CD4-positive, alpha-beta memory T cell (primary cell): ENCODE measurements at regions of chr15 and their contacts with region 1.

Region 1: DNA sequence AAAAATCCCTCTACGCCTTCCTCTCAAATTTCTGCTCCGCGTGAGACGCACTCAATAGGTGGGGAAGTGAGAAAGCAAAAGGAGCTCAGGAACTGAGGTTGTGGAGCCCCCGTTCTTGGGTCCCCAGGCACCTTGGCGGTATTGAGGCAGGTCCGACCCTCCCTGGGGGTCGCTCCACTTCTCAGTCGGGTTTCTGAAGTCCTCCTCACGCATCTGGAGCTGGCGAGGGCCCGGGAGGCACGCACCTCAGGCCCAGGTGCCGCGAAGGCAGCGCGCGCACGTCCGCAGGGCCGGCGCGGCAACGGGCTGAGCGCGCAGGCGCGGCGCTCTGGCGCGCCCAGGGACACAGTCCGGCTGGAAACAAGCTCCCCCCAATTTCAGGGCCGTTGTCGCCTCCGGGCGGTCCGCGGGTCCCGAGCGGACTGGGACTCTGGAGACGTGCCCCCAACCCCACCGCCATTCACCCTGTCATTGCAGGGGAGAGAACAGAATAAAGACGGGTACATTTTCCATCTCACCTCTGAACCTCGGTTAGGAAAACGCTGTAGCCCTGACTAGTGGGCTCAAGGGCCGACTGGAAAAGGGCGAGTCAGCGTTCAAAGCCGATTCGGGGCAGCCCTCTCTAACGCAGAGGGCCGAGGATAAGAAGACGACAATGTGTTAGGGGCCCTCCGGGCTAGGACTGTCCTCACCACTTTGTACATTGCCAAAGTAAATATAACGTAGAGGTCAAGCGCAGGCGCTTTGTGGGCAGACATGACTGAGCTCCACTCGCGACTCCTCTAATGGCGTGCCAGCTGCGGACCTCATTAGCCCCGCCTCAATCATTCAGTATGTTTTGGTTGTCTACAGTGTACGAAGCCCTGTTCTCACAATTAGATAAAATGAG is at the start of gene ZNF770:
- DNase-seq: peak; percentile 76 to 88 (median 85)
- H3K4me3 ChIP-seq: peak within 1 kb of the TSS; percentile 97 to 100
- H3K4me3 Mint-ChIP-seq: peak within 1 kb of the TSS; percentile 94 to 100 (median 98)
- H3K27ac ChIP-seq: peak within 1 kb of the TSS; percentile 96
- H3K27ac Mint-ChIP-seq: peak within 1 kb of the TSS; percentile 98 to 100 (median 99)
- H3K4me1 ChIP-seq: peaks cover 47% of the 10 kb centered on the region
- H3K4me1 Mint-ChIP-seq: peaks cover 29 to 54% (median 38%) of the 10 kb centered on the region in 4 donors
- H3K27me3 ChIP-seq: no peaks in the 10 kb centered on the region
- H3K27me3 Mint-ChIP-seq: peaks cover 0 to 3% of the 10 kb centered on the region in 2 donors
- total RNA-seq, gene ZNF770: 55.8 to 63.5 TPM

Region 2: GRCh38 chr15:34038023-34038870 is 950.0 kb before region 1 on chr15:
- CTCF ChIA-PET with region 1: interaction called, 3 read pairs
- POLR2A ChIA-PET with region 1: interaction called, 9 read pairs
- intact Hi-C with region 1: loop called (anchors 2 kb)
- DNase-seq: peak; percentile 65 to 74 (median 70)
- H3K4me3 ChIP-seq: peak overlapping the region; percentile 92 to 96
- H3K4me3 Mint-ChIP-seq: peak overlapping the region; percentile 85 to 97 (median 94)
- H3K27ac ChIP-seq: peak overlapping the region; percentile 73
- H3K27ac Mint-ChIP-seq: peak overlapping the region; percentile 83 to 96 (median 93)
- H3K4me1 ChIP-seq: peaks cover 13% of the 10 kb centered on the region
- H3K4me1 Mint-ChIP-seq: peaks cover 9 to 23% (median 15%) of the 10 kb centered on the region in 4 donors
- H3K27me3 ChIP-seq: no peaks in the 10 kb centered on the region
- H3K27me3 Mint-ChIP-seq: no peaks in the 10 kb centered on the region

Region 3: DNA sequence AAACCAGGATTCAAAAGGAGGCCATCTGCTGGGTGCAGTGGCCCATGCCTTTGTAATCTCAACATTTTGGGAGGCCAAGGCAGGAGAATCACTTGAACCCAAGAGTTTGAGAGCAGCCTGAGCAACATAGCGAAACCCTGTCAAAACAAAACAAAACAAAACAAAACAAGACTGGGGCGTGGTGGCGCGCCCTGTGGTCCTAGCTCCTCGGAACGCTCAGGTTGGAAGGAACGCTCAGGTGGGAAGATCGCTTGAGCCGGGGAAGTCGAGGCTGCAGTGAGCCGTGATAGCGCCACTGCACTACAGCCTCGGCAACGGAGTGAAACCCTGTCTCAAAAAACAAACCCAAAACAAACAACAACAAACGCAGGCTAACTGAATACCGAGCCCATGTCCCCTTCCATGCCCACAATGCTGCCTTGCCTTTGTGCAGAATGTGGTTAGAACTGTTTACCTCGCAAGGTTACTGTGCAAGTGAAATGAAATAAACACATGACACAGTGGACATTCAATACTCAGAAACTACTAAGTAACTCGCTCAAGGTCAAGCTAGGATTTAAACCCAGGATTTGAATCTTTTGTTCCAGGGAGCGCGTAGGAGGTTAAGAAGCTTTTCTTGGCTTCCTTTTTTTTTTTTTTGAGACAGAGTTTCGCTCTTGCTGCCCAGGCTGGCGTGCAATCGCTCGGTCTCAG is 764.2 kb before region 1 on chr15:
- CTCF ChIA-PET with region 1: no interaction called
- POLR2A ChIA-PET with region 1: interaction called, 6 read pairs
- intact Hi-C with region 1: loop called (anchors 1 kb)
- DNase-seq: no peak
- H3K4me3 ChIP-seq: peak overlapping the region; percentile 88 to 93
- H3K4me3 Mint-ChIP-seq: peak overlapping the region; percentile 90 to 99 (median 96)
- H3K27ac ChIP-seq: peak overlapping the region; percentile 89
- H3K27ac Mint-ChIP-seq: peak overlapping the region; percentile 92 to 100 (median 99)
- H3K4me1 ChIP-seq: peaks cover 25% of the 10 kb centered on the region
- H3K4me1 Mint-ChIP-seq: peaks cover 21 to 32% (median 25%) of the 10 kb centered on the region in 4 donors
- H3K27me3 ChIP-seq: no peaks in the 10 kb centered on the region
- H3K27me3 Mint-ChIP-seq: peaks cover 3% of the 10 kb centered on the region in 2 donors

Region 4: DNA sequence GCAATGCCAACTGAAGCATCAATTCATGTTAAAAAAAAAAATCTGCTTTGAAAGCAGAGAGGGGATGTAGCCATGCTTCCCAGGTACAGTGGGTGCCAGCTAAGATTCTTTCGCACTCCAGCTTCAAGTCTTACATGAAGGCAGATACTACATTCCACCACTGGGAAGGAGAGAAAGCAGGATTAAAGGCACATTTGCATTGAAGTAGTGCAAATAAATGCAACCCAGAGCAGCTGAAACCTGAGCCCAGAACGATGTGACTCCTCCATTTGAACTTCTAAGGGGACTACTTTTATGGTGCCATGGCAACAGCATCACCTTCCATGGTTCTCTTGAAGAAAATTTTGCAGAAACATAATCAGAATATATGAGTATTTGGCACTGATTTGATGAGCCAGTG is 214.3 kb before region 1 on chr15:
- CTCF ChIA-PET with region 1: no interaction called
- POLR2A ChIA-PET with region 1: no interaction called
- intact Hi-C with region 1: no loop called
- DNase-seq: no peak
- H3K4me3 ChIP-seq: no peak overlapping the region
- H3K4me3 Mint-ChIP-seq: no peak overlapping the region
- H3K27ac ChIP-seq: no peak overlapping the region
- H3K27ac Mint-ChIP-seq: no peak overlapping the region
- H3K4me1 ChIP-seq: no peaks in the 10 kb centered on the region
- H3K4me1 Mint-ChIP-seq: no peaks in the 10 kb centered on the region
- H3K27me3 ChIP-seq: no peaks in the 10 kb centered on the region
- H3K27me3 Mint-ChIP-seq: peaks cover 7% of the 10 kb centered on the region in 2 donors

Region 5: DNA sequence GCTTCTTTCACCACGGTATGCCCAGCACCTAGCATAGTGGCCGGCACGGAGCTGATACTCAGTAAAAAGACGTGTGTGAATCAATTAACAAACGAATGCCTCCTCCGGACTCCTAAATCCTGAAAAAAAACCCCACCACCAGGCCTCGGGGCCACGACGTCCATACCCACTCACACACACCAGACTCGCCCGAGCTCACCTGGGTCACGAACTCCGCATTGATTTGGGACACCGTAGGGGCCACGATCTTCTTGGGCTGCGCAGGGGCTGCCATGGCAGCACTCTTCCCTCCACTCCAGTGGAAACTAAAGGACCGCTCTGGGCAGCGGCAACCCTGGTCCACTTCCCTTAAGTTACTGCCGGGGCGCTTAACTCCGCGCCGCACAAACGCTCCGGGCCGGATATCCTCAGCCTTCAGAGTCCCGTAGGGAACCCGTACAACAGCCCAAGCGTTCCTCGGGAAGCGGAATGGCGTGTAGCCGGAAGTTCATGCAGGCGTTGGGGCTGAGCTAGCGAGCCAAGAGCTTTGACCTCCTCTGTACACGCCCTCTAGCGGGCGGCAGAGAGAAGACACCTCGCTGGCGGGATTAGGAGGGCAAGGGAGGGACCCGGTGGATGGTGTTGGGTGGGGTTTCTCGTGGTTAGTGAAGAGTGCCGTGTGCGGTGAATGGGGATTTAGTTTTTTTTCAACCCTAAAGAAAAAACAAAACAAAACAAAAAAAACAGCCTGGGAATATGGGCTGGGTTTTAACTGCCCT is 18.7 kb before region 1 on chr15 and contains the start of gene AQR:
- CTCF ChIA-PET with region 1: interaction called, 76 read pairs
- POLR2A ChIA-PET with region 1: interaction called, 210 read pairs
- intact Hi-C with region 1: loop called (anchors 1 kb)
- DNase-seq: peak; percentile 88 to 95 (median 90)
- H3K4me3 ChIP-seq: peak within 1 kb of the TSS; percentile 68 to 77
- H3K4me3 Mint-ChIP-seq: peak within 1 kb of the TSS; percentile 96 to 100 (median 98)
- H3K27ac ChIP-seq: peak within 1 kb of the TSS; percentile 69
- H3K27ac Mint-ChIP-seq: peak within 1 kb of the TSS; percentile 91 to 98 (median 97)
- H3K4me1 ChIP-seq: peaks cover 35% of the 10 kb centered on the region
- H3K4me1 Mint-ChIP-seq: peaks cover 30 to 48% (median 40%) of the 10 kb centered on the region in 4 donors
- H3K27me3 ChIP-seq: no peaks in the 10 kb centered on the region
- H3K27me3 Mint-ChIP-seq: no peaks in the 10 kb centered on the region
- total RNA-seq, gene AQR: 42.8 to 47.6 TPM